Activated T-helper 1 cell treated with anti-CD3 and anti-CD28 coated beads, Interleukin-12 subunit alpha, Interleukin-12 subunit beta, Interleukin-2, Interleukin-4 antibody, amounts not matched to agents 30 ng/mL and 10 ng/mL and 1 ng/mL, durations not matched to agents 14 hours and 24 hours and 36 hours (primary cell): ENCODE measurements at regions of chr12 and their contacts with region 1.

Region 1: DNA sequence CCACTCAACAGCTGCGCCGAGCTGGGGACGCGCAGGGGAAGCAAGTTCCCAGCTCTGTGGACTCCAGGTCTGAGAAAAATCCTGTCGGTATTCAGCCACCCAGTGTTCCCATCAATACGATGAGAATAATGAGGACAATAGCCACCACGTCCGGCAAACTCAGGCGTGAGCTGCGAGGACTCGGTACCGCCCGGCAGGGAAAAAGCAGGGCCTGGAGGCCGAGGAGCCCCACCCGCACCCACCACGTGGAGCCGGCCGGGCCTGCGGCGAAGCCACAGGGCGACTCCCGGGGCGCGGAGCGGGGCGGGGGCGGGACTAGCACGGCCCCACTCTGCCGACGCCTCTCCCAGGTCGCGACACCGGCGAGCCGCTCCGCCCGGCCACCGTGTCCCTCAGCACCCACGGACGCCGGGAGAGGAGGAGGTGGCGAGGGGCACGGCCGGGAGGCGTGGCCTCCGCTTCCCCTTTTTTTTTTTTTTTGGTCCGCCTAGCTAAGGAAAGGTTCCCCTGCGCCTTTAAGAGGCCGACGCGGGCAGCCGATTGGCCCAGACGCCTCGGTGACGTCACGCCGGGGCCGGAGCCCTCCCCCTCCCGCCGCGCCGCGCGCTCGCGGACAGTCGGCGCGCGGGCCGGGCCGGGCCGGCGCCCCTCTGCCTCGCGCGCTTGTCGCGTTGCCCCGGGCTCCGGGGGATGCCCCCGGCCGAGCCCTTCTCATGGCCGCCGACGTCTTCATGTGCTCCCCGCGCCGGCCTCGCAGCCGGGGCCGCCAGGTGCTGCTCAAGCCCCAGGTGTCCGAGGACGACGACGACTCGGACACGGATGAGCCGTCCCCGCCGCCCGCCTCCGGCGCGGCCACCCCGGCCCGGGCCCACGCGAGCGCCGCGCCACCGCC is at the start of gene MLXIP:
- DNase-seq: peak; percentile 88
- H3K4me3 Mint-ChIP-seq: peak within 1 kb of the TSS; percentile 94
- H3K27ac Mint-ChIP-seq: peak within 1 kb of the TSS; percentile 76
- H3K4me1 Mint-ChIP-seq: peaks cover 44% of the 10 kb centered on the region
- H3K27me3 Mint-ChIP-seq: peaks cover 6% of the 10 kb centered on the region
- total RNA-seq, gene MLXIP: 59.0 and 62.1 TPM in 2 replicates

Region 2: DNA sequence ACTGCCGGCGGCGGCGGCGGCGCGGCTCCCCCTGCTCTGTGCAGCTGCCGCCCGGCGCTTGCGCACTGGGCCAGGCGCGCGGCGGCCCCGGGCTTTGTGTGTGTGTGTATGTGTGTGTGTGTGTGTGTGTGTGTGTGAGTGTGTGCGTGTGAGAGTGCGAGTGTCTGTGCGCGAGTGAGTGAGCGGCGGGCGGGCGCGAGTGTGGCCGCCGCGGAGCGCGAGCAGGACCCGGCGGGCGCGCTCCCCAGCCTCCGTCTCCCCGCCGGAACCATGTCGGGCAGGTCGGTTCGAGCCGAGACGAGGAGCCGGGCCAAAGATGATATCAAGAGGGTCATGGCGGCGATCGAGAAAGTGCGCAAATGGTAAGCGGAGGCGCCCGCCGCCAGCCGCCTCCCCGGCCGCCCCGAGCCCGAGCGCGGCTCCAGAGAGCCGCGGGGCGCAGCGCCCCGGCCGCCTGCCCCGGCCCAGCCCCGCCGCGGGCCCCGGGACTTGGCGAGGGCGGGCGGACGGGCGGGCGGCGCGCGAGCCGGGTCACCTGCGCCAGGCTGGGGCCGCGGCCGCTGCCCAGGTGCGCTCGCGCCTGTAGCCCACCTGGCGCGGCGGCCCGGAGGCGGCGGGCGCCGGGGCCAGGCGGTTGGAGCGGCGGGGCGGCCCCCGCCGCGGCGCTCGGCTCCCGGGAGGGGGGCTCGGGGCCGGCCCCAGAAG is 56.4 kb before region 1 on chr12 and contains the start of gene BCL7A:
- intact Hi-C with region 1: loop called (anchors 5 kb)
- DNase-seq: peak; percentile 47
- H3K4me3 Mint-ChIP-seq: peak within 1 kb of the TSS; percentile 87
- H3K27ac Mint-ChIP-seq: peak within 1 kb of the TSS; percentile 92
- H3K4me1 Mint-ChIP-seq: peaks cover 13% of the 10 kb centered on the region
- H3K27me3 Mint-ChIP-seq: peaks cover 32% of the 10 kb centered on the region
- total RNA-seq, gene BCL7A: 9.7 and 13.0 TPM in 2 replicates

Region 3: DNA sequence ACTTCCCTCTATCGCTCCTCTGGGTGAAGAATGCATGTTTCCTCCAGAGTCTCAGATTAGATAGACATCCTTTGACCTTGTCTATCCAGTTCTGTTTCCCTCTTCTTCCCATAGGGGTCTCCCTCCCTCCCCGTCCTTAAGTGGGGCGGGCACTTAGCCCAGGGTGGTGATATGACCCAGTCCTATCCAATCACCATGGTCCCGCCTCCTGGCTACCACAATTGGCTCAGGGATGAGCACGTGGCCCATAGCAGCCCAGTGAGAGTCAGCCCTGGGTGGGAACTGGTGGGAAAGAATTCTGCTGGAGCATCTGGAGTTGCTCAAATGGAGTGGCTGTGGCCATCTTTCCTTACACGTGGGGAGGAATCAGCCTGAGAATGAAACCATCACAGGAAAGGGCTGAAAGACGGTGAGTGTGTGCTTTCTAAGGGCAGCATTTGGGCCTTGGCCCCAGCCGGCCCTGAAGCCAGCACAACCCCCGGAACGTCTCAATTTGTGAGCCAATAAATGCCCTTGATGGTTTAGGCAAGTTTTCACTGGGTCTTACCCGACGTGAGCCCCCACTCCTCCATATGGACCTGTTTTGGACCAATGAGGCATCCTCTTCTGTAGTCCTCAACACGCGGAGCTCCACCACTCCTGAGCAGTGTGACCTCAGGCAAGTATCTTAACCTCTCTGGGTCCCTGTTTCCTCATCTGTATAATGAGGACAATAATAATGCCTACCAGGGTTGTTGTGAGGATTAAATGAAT is 14.2 kb before region 1 on chr12:
- intact Hi-C with region 1: no loop called
- DNase-seq: no peak
- H3K4me3 Mint-ChIP-seq: no peak overlapping the region
- H3K27ac Mint-ChIP-seq: peak overlapping the region; percentile 7
- H3K4me1 Mint-ChIP-seq: peaks cover 26% of the 10 kb centered on the region
- H3K27me3 Mint-ChIP-seq: peaks cover 4% of the 10 kb centered on the region

Region 4: DNA sequence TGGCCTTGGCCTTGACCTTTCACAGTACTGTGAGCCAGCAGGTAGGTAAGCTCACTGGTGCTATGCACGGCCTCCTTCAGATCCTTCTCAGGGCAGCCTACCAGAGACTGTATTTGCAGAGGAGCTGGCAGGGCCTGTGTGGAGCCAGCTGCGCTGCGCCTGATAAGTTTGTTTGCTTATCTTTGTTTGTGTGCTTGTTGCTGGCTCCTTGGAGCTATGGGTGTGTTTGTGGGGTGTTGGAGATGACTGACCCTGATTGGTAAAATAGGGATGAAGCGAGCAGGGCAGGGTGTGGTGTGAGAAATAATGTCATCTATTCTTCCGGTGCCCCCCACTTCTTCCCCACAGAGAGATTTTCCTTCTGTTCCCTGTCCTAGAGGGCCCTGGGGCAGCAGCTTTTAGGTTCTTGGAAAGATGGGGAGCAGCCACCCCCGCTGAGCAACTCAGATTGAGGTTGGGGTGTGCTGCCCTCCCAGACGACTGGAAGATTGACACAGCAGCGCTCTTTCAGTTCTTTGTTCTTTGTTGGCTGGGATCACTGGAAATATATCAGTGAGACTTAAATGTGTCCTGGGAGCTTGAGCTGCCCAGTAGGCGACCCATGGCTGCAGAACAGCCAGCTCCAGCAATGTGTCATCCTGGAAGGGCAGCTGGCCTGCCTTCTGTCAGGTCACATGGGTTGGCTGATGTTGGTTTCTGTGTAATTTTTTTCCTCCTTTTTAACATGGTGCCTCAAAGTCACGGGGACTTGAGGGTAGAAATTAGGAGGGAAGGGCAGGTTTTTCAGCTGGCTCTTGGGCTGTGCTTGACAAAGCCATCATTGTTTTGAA is 19.8 kb after region 1 on chr12:
- intact Hi-C with region 1: loop called (anchors 2 kb)
- DNase-seq: no peak
- H3K4me3 Mint-ChIP-seq: no peak overlapping the region
- H3K27ac Mint-ChIP-seq: peak overlapping the region; percentile 40
- H3K4me1 Mint-ChIP-seq: peaks cover 44% of the 10 kb centered on the region
- H3K27me3 Mint-ChIP-seq: no peaks in the 10 kb centered on the region

Region 5: DNA sequence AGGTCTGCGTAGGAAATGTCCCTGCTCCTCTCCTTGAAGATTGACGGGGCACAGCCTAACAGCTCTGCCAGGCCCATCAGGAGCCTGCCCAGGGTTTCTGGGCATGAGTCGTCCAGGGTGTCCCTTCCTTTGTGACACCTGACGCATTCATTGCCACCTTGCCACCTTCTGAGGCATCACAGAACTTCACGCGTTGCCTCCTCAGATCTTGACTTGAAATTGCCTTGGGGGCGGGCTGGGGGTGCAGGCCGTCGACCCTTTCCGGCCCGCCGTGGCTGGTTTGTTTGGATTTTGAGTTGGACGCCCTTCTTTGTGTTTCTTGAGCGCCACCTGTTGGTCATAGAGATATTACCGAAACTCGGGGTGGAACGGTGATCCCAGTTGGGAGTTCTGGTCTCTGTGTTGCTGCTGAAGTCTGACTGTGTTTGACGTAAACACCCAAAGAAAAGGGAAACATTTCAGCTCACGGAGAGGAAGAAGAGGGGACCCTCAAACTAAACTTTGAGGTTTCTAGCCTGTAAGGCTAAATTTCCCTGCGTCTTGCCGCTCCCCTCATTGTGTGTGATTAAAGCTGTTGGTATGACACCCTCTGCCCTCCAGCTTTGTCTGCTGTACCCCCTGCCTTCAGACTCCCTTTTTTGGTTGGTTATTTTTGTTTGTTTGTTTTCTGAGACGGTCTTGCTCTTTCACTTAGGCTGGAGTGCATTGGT is 44.8 kb after region 1 on chr12:
- intact Hi-C with region 1: loop called (anchors 1 kb)
- DNase-seq: peak; percentile 61
- H3K4me3 Mint-ChIP-seq: no peak overlapping the region
- H3K27ac Mint-ChIP-seq: peak overlapping the region; percentile 21
- H3K4me1 Mint-ChIP-seq: peaks cover 22% of the 10 kb centered on the region
- H3K27me3 Mint-ChIP-seq: no peaks in the 10 kb centered on the region

Region 6: DNA sequence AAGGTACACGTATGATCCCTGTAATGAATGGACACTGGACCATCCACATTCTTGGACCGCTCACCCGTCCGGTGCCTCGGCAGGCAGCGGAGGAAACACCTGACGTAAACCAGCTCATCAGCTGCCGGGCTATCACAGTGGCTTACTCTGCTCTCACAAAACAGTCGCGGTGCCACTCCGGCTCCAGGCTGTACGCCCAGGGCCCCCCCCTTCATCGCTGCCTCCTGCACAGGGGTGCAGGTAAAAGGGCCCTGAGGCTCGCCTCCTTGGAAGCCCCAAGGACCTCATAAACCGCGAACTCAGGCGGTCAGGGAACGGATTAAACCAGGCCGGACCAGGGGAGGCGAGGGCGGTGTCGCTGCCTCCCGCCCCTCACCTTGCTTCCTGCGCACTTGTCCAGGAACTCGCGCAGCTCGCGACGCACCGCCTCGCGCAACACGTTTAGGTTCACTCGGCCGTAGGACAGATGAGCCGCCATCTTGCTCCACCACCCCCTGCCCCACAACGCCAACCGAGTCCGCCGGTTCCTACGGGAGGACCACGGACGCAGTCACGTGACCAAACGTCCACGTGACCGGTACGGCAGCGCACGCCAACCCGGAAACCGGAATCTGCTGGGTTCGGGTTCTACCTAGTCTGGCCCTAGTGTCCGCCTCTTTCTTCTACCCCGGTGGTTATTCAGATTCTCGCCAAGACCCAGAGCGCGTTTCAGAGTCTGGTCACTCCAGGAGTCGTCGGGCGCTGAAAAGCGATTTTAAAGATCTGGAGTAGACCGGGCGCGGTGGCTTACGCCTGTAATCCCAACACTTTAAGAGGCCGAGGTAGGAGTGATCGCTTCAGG is 187.8 kb after region 1 on chr12 and contains the start of gene VPS33A:
- intact Hi-C with region 1: loop called (anchors 2 kb)
- DNase-seq: peak; percentile 95
- H3K4me3 Mint-ChIP-seq: peak within 1 kb of the TSS; percentile 94
- H3K27ac Mint-ChIP-seq: peak within 1 kb of the TSS; percentile 99
- H3K4me1 Mint-ChIP-seq: peaks cover 22% of the 10 kb centered on the region
- H3K27me3 Mint-ChIP-seq: no peaks in the 10 kb centered on the region
- total RNA-seq, gene VPS33A: 25.6 and 28.7 TPM in 2 replicates